ENCODE measurements at regions of chr9 and their contacts with region 1.

Region 1: GRCh38 chr9:114592356-114592755 is 4.8 kb downstream of the ATP6V1G1 start:
- DNase-seq: peak; percentile 79 to 90 (median 90)
- H3K4me3 ChIP-seq: peak overlapping the region in 6 of 7 experiments; percentile 11 to 68 (median 33)
- H3K27ac ChIP-seq: peak overlapping the region; percentile 55 to 73
- H3K4me1 ChIP-seq: peaks cover 32 to 58% (median 47%) of the 10 kb centered on the region in 4 experiments
- H3K27me3 ChIP-seq: no peaks in the 10 kb centered on the region

Region 2: DNA sequence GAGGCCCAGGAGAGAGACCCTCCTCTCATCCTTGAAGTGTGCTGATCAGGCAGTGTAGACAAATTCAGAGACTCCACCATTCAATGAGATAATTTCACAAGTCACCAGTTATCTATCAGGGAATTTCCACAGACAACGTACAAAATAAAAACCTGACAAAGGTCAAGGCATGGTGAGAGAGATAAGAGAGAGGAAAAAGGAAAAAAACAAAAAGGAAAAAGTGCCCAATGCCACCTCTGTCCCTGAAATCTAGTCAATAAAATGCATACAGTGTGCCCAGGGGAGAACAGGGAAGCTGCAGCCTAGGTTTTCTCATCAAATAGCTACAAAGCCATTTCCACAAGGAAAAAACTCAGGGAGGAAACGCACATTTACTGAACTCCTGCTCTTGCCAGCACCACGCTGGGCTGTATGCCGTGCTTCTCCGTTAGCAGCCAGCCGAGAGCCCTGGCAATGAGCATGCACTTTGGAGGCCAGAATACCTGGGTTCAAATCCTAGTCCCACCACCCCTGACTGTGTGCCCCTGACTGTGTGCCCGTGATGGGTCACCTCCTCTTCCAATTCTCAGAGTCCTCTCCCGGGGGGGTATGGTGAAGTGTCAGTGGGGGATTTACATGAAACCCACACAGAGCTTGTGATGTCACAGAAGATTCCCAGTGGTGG is 98.7 kb before region 1 on chr9:
- CTCF ChIA-PET with region 1: no interaction called
- POLR2A ChIA-PET with region 1: no interaction called
- DNase-seq: no peak
- H3K4me3 ChIP-seq: no peak overlapping the region
- H3K27ac ChIP-seq: no peak overlapping the region
- H3K4me1 ChIP-seq: peaks cover 0 to 5% (median 0%) of the 10 kb centered on the region in 4 experiments
- H3K27me3 ChIP-seq: peaks cover 0 to 21% (median 4%) of the 10 kb centered on the region in 5 experiments

Region 3: GRCh38 chr9:114574438-114574837 is 17.9 kb before region 1 on chr9:
- CTCF ChIA-PET with region 1: interaction called, 13 read pairs
- POLR2A ChIA-PET with region 1: no interaction called
- DNase-seq: peak in 2 of 3 donors; percentile 37 to 41
- H3K4me3 ChIP-seq: no peak overlapping the region
- H3K27ac ChIP-seq: no peak overlapping the region
- H3K4me1 ChIP-seq: peaks cover 0 to 6% (median 4%) of the 10 kb centered on the region in 4 experiments
- H3K27me3 ChIP-seq: no peaks in the 10 kb centered on the region

Region 4: DNA sequence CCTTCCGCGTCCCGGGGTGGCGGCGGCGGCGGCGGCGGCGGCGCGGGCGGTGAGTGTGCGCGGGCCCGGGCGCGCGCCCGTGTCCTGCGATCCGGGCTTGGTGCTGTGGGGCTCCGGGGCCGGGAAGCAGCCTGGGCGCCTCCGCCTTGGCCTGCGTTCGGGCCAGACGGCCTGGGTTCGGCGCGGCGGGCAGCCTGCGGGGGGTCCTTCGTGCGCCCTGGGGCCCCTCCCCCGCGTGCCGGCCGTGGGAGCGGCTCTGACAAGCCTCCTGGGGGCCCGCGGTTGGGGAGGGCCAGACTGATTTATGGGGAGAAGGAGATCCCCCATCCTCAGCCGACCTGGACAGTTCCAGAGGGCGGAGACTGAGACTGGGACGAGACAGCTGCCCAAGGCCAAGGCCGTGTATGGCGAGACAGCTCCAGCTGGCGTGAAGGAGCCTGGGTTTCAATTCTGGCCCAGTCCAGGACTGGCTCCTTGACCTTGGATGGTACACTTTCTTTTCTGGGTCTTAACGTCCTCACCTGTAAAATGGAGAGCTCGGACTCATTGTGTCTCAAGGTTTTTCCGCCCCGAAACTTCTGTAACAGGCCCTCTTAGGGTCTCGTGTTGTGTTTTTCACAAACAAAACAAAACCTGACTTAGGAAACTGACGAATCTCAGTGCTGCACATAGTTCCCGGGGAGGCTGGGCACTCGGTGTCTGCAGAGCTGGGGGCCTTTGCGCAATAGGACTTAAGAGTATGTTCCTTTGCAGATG is 19.3 kb after region 1 on chr9:
- CTCF ChIA-PET with region 1: interaction called, 46 read pairs
- POLR2A ChIA-PET with region 1: interaction called, 6 read pairs
- DNase-seq: peak; percentile 25 to 62 (median 56)
- H3K4me3 ChIP-seq: peak overlapping the region; percentile 60 to 89 (median 77)
- H3K27ac ChIP-seq: peak overlapping the region; percentile 47 to 82
- H3K4me1 ChIP-seq: peaks cover 3 to 46% (median 42%) of the 10 kb centered on the region in 4 experiments
- H3K27me3 ChIP-seq: no peaks in the 10 kb centered on the region

Region 5: DNA sequence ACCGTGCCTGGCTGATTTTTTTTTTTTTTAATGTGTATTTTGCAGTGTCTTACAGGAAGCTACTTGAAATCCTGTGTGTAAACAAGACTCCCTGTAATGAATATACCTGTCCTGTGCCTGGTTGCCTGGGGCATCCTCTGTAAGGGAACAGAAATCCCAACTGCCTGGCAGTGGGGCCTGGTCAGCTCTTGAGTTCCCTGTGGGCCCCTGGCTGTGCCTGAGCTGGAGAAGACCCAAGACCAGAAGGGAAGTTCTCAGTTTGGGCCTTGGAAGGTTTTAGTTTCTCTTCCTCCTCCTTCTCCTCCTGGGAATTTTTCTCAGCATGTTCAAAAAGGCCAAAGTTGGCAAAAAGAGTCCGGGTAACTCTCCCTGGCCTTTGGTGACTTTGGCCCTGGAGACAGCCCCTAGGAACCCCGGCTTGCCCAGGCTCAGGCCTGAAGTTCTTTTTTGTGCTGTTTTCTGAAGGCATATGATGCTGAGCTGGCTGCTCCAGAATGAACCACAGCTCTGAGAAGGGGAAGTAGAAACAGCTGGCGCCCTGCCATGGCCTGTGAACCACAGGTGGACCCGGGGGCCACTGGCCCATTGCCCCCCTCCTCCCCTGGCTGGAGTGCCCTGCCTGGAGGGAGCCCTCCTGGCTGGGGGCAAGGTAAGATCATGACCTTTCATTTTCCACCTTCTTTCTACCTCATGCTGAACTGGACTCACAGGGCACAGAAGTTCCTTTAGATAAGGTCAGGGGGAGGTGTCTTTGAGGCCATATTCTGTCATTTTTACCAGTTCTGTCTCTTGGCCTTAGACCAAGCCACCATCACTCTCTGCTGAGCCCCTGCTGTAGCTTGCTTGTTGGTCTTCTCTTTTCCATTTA is 24.5 kb after region 1 on chr9:
- CTCF ChIA-PET with region 1: interaction called, 16 read pairs
- POLR2A ChIA-PET with region 1: interaction called, 6 read pairs
- DNase-seq: peak; percentile 84 to 96 (median 95)
- H3K4me3 ChIP-seq: peak overlapping the region in 1 of 7 experiments; percentile 43
- H3K27ac ChIP-seq: peak overlapping the region; percentile 64 to 81
- H3K4me1 ChIP-seq: peaks cover 7 to 53% (median 40%) of the 10 kb centered on the region in 4 experiments
- H3K27me3 ChIP-seq: no peaks in the 10 kb centered on the region